Activated CD4-positive, alpha-beta T cell treated with anti-CD3 and anti-CD28 coated beads, Interleukin-2, amount 10 ng/mL, durations not matched to agents 24 days and 14 days (primary cell): ENCODE measurements at regions of chrX and their contacts with region 1.

Region 1: GRCh38 chrX:150365051-150365989 is 2.2 kb downstream of the MAMLD1 start:
- DNase-seq: peak; percentile 93
- H3K4me3 Mint-ChIP-seq: peak overlapping the region; percentile 83
- H3K27ac Mint-ChIP-seq: peak overlapping the region; percentile 86
- H3K4me1 Mint-ChIP-seq: peaks cover 22% of the 10 kb centered on the region
- H3K27me3 Mint-ChIP-seq: peaks cover 6% of the 10 kb centered on the region

Region 2: DNA sequence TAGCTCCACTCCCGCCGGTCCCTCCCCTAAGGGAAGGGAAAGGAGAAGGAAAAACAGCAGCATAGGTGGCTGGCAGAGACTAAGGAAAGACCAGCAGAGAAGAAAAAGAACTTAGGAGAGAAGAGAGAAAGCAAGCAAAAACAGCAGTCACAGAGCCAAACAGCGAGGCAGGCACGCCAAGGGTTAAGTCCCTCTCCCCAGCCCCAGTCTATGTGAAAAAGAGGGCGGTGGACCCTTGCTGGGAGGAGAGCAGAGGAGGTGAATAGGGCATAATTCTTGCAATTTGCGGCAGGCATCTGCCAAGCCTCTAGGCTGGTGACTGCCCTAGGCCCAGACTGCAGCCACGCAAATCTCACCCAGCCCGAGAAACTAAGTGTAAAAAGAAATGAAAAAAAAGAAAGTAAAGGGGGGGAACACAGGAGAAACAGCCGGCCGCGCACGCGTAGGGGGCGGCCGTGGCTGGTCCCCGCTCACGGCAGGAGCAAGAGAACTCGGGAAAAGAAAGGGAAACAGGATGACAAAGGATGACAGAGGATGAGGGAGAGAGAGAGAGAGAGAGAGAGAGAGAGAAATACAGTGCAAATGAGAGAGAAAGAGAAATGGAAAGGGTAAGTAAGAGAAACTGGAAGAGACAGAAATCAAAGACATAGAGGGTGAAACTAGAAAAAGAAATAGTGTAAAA is 535.0 kb before region 1 on chrX:
- intact Hi-C with region 1: loop called (anchors 10 kb)
- DNase-seq: peak; percentile 75
- H3K4me3 Mint-ChIP-seq: peak overlapping the region; percentile 84
- H3K27ac Mint-ChIP-seq: peak overlapping the region; percentile 96
- H3K4me1 Mint-ChIP-seq: peaks cover 37% of the 10 kb centered on the region
- H3K27me3 Mint-ChIP-seq: no peaks in the 10 kb centered on the region

Region 3: DNA sequence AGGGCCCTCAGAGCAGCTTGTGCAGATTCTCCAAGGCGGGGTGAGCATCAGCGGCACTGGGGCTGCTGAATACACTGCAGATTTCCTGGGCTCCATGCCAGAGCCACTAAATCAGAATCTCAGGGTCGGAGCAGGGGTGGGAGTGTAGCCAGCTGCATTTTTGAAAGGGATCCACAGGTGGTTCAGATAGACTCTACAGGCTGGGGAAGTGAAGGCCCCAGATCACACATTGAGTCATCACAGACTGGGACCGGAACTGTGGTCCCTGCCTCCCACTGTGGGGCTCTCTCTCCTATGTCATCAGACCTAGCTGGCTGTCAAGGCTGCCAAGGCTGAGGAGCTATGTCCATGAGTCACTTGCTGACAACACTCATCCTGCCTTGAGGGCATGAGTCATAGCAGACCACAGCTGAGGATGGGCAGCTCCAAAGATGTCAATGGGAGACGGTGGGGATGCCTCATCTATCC is 164.5 kb before region 1 on chrX:
- intact Hi-C with region 1: loop called (anchors 1 kb)
- DNase-seq: peak; percentile 77
- H3K4me3 Mint-ChIP-seq: peak overlapping the region; percentile 10
- H3K27ac Mint-ChIP-seq: peak overlapping the region; percentile 56
- H3K4me1 Mint-ChIP-seq: peaks cover 8% of the 10 kb centered on the region
- H3K27me3 Mint-ChIP-seq: no peaks in the 10 kb centered on the region

Region 4: DNA sequence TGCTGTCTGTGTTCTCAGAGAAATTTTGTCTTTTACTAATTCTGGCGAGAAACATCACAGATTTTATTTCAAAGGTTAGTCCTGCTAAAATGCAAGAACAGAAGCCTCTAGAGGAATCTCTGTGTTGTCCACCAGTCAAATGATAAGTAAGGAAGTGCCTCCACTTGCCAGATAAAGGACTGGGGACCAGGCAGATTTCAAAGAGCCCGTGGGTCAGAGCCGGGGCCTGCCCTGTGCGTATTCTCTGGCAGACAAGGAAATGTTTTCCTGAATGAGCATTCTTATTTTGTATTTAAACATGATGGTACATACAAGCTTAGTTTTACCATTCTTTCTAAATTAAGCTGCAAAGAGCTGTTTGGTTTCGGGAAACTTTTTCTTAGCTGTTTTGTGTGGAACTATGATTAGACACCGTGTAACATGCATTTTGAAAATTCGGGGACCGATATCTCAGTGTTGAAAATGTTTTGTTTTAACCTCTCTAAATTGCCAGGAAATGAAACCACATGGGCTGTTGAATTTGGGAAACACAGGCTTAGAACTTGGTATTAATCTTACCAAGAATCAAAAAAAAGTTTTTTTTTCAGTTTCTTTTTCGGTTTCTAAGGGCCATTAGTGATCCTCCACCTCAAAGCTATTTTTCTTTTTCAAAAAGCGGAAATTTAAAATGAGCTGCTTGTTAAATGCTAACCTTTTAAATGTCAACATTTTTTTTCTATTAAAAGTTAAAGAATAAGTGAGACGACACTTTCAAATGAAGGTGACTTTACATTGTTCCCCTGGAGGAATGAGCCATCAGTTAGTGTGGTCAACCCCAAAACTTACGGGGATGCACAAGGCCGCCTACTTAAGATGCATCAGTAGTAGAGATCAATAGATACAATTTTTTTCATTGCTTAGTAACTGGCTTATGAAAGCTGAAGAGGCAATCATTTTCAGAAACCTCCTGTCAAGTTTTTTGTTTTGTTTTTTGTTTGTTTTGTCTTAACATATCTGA is 113.5 kb after region 1 on chrX:
- intact Hi-C with region 1: loop called (anchors 1 kb)
- DNase-seq: peak; percentile 79
- H3K4me3 Mint-ChIP-seq: peak overlapping the region; percentile 76
- H3K27ac Mint-ChIP-seq: peak overlapping the region; percentile 89
- H3K4me1 Mint-ChIP-seq: peaks cover 52% of the 10 kb centered on the region
- H3K27me3 Mint-ChIP-seq: no peaks in the 10 kb centered on the region

Region 5: DNA sequence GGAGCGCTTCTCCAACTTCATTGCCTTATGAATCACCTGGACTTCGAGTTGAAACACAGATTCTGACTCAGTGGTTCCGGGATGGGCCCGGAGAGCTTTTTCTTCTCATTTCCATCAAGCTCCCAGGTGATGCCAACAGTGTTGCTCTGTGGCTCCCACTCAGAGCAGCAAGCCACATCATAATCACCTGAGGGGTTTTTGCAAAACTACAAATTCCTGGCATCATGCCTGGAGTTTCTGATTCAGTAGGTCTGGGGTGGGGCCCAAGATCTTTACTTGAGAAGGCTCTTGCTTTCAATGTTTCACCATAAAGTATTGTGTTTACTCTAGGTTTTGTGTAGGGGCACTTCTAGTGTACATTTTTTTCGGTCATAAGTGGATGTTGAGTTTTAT is 210.1 kb after region 1 on chrX:
- intact Hi-C with region 1: loop called (anchors 2 kb)
- DNase-seq: peak; percentile 76
- H3K4me3 Mint-ChIP-seq: peak overlapping the region; percentile 83
- H3K27ac Mint-ChIP-seq: peak overlapping the region; percentile 95
- H3K4me1 Mint-ChIP-seq: peaks cover 60% of the 10 kb centered on the region
- H3K27me3 Mint-ChIP-seq: no peaks in the 10 kb centered on the region